Activated T-helper 2 cell treated with anti-CD3 and anti-CD28 coated beads, Interferon-gamma antibody, Interleukin-2, Interleukin-4, amounts not matched to agents 10 μg/mL and 5 μg/mL and 100 μg/mL, durations not matched to agents 14 hours and 24 hours and 36 hours (primary cell): ENCODE measurements at regions of chr12 and their contacts with region 1.

Region 1: DNA sequence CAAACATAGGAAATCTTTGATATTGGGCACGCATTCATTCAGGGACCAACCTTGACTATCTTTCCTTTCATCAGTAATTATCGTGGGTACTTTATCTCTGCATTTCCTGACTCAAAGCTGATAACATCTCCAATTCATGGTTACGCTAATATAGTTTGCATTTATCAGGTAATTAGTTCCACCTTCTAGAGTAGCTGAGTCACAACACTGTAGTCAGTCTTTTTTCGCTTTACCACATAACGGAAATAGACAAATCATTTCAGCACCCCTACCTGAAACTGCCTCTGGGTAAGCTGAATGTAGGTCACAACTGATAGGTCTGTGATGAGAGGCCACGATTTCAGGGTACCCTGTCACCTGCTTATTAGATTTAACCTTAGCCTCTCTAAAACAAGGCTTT is 36.7 kb upstream of the IL22 start:
- DNase-seq: peak; percentile 36
- H3K4me3 Mint-ChIP-seq: no peak overlapping the region
- H3K27ac Mint-ChIP-seq: no peak overlapping the region
- H3K4me1 Mint-ChIP-seq: peaks cover 35% of the 10 kb centered on the region
- H3K27me3 Mint-ChIP-seq: peaks cover 28% of the 10 kb centered on the region

Region 2: DNA sequence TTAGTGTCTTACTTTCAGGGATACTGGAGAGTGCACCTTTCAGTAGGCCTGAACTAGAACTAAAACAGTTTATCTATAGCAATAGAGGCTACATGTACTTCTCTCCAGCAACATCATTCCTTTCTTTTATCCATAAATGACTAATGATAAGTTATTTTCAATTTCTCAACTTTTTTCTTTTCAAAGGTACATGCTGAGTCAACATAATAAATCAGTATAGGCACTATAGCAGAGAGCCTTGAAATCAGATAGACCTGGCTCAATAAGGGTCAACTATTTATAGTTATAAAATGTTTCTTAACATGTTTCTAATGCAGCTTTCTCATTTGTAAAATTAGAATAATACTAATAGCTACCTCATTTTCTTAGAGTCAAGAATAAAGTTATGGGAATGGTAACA is 42.3 kb before region 1 on chr12:
- intact Hi-C with region 1: no loop called
- DNase-seq: no peak
- H3K4me3 Mint-ChIP-seq: no peak overlapping the region
- H3K27ac Mint-ChIP-seq: no peak overlapping the region
- H3K4me1 Mint-ChIP-seq: peaks cover 5% of the 10 kb centered on the region
- H3K27me3 Mint-ChIP-seq: peaks cover 68% of the 10 kb centered on the region

Region 3: GRCh38 chr12:68306564-68306963 is 16.4 kb after region 1 on chr12:
- intact Hi-C with region 1: loop called (anchors 1 kb)
- DNase-seq: no peak
- H3K4me3 Mint-ChIP-seq: no peak overlapping the region
- H3K27ac Mint-ChIP-seq: no peak overlapping the region
- H3K4me1 Mint-ChIP-seq: peaks cover 12% of the 10 kb centered on the region
- H3K27me3 Mint-ChIP-seq: no peaks in the 10 kb centered on the region